ENCODE measurements at regions of chr4 and their contacts with region 1.

Region 1: GRCh38 chr4:6892190-6892908 is 17.3 kb upstream of the TBC1D14 start:
- DNase-seq: peak; percentile 63 to 93 (median 88)
- H3K4me3 ChIP-seq: peak overlapping the region in 5 of 7 experiments; percentile 27 to 56 (median 43)
- H3K27ac ChIP-seq: peak overlapping the region in 1 of 2 experiments; percentile 62
- H3K4me1 ChIP-seq: peaks cover 15 to 66% (median 61%) of the 10 kb centered on the region in 4 experiments
- H3K27me3 ChIP-seq: no peaks in the 10 kb centered on the region

Region 2: DNA sequence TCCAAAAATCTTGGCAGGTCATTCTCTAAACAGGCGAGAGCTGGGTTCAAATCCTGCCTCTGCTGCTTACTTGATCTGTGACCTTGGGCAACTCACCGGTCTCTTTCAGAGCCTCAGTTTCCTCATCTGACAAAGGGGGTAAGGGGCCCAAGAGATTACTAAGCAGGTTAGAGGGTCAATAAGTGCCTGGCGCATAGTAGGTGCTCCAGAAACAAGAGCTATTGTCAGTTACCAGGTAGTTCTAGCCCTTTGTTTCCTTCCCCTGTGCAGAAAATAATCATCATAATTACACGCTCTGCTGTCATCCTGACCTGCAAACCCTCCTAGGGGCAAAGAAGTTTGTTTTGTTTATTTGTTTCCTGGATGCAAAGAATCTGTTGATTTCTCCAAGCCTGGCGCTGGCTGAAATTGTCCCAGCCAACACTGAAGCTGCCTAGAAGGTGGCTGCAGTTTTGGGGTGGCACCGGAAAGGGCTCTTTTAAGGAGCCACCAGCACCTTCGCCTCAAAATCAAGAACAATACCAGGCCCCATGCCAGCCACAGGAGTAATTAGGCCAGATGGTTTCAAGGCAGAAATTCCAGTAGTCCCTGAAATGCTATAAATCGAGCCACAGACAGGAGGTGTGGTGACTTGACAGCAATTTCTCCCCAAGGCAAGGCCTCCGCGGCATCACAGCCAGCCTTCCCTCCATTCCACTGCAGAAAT is 120.0 kb before region 1 on chr4:
- CTCF ChIA-PET with region 1: no interaction called
- POLR2A ChIA-PET with region 1: no interaction called
- DNase-seq: no peak
- H3K4me3 ChIP-seq: no peak overlapping the region
- H3K27ac ChIP-seq: no peak overlapping the region
- H3K4me1 ChIP-seq: peaks cover 0 to 16% (median 1%) of the 10 kb centered on the region in 4 experiments
- H3K27me3 ChIP-seq: peaks cover 0 to 3% (median 0%) of the 10 kb centered on the region in 5 experiments

Region 3: GRCh38 chr4:6834867-6835266 is 57.5 kb before region 1 on chr4:
- CTCF ChIA-PET with region 1: no interaction called
- POLR2A ChIA-PET with region 1: no interaction called
- DNase-seq: no peak
- H3K4me3 ChIP-seq: no peak overlapping the region
- H3K27ac ChIP-seq: no peak overlapping the region
- H3K4me1 ChIP-seq: no peaks in the 10 kb centered on the region
- H3K27me3 ChIP-seq: no peaks in the 10 kb centered on the region

Region 4: GRCh38 chr4:6909073-6909965 is 17.0 kb after region 1 on chr4 and contains the start of gene TBC1D14:
- CTCF ChIA-PET with region 1: interaction called, 18 read pairs
- POLR2A ChIA-PET with region 1: interaction called, 4 read pairs
- DNase-seq: peak; percentile 87 to 91 (median 88)
- H3K4me3 ChIP-seq: peak within 1 kb of the TSS; percentile 71 to 91 (median 83)
- H3K27ac ChIP-seq: peak within 1 kb of the TSS; percentile 89 to 96
- H3K4me1 ChIP-seq: peaks cover 5 to 52% (median 44%) of the 10 kb centered on the region in 4 experiments
- H3K27me3 ChIP-seq: peaks cover 0 to 16% (median 4%) of the 10 kb centered on the region in 5 experiments

Measured in common myeloid progenitor, CD34-positive (primary cell).